CD4-positive, alpha-beta memory T cell (primary cell): ENCODE measurements at regions of chr19 and their contacts with region 1.

Region 1: DNA sequence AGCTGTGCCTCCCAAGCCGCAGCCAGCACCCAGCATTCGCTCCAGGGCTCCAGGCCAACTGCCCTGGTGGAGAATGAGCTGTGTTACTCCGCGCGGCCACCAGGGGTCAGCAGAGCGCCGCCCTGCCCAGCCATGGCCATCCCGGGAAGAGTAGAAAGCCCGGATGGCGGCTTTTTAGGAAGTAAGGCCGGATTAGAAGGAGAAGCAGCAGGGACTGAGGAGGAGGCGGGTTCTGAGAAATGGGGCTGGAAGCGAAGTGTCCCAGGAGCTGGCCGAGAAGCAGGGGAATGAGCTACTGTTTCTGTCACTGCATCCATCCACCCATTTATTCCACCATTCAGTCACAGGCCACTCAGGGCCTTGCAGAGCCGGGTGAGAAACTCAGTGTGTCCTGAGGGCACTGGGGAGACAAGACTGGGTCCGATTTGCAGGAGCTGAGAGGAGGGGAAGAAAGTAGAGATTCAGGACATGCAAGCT is 6.6 kb upstream of the NPAS1 start:
- DNase-seq: peak; percentile 51 to 62 (median 53)
- H3K4me3 ChIP-seq: no peak overlapping the region
- H3K4me3 Mint-ChIP-seq: peak overlapping the region in 6 of 8 donors; percentile 6 to 65 (median 30)
- H3K27ac ChIP-seq: no peak overlapping the region
- H3K27ac Mint-ChIP-seq: peak overlapping the region in 2 of 7 donors; percentile 53 to 57
- H3K4me1 ChIP-seq: peaks cover 7% of the 10 kb centered on the region
- H3K4me1 Mint-ChIP-seq: peaks cover 8 to 9% (median 9%) of the 10 kb centered on the region in 4 donors
- H3K27me3 ChIP-seq: no peaks in the 10 kb centered on the region
- H3K27me3 Mint-ChIP-seq: peaks cover 5 to 10% of the 10 kb centered on the region in 2 donors

Region 2: DNA sequence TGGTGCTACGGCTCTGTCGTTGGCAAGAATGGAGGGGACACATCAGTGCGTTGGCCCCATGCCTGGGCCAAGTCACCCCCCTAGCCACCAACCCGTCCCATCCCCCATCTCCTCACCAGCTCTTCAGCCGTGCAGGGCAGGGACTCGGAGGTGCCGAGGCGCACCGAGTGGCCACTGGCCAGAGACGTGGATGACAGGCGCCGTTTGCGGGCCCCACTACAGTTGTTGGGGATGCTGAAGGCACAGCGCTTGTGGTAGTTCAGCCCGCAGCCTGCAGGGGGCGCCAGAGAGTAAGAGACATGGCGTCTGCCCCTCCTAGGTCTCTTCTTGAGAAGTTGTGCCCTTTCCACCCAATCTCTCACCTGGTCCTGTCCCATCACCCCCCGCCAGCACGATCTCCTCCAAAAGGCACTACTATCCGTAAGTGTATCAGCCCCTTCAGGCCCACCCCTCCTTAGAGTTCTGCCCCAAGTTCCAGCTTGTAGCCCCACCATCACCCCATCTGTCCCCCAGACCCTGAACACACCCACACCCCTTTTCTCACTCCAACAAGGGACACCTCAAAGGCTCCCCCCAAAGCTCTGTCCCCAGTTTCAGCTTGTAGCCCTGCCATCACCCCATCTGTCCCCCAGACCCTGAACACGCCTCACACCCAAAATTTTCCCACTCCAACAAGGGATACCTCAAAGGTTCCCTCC is 308.6 kb before region 1 on chr19:
- CTCF ChIA-PET with region 1: no interaction called
- POLR2A ChIA-PET with region 1: no interaction called
- intact Hi-C with region 1: no loop called
- DNase-seq: peak; percentile 74 to 83 (median 79)
- H3K4me3 ChIP-seq: no peak overlapping the region
- H3K4me3 Mint-ChIP-seq: peak overlapping the region in 1 of 8 donors; percentile 45
- H3K27ac ChIP-seq: no peak overlapping the region
- H3K27ac Mint-ChIP-seq: peak overlapping the region; percentile 10 to 92 (median 87)
- H3K4me1 ChIP-seq: peaks cover 14% of the 10 kb centered on the region
- H3K4me1 Mint-ChIP-seq: peaks cover 6 to 18% (median 12%) of the 10 kb centered on the region in 4 donors
- H3K27me3 ChIP-seq: no peaks in the 10 kb centered on the region
- H3K27me3 Mint-ChIP-seq: no peaks in the 10 kb centered on the region

Region 3: GRCh38 chr19:46882034-46882433 is 131.0 kb before region 1 on chr19:
- CTCF ChIA-PET with region 1: interaction called, 11 read pairs
- POLR2A ChIA-PET with region 1: no interaction called
- intact Hi-C with region 1: no loop called
- DNase-seq: no peak
- H3K4me3 ChIP-seq: no peak overlapping the region
- H3K4me3 Mint-ChIP-seq: no peak overlapping the region
- H3K27ac ChIP-seq: no peak overlapping the region
- H3K27ac Mint-ChIP-seq: no peak overlapping the region
- H3K4me1 ChIP-seq: peaks cover 20% of the 10 kb centered on the region
- H3K4me1 Mint-ChIP-seq: peaks cover 20 to 47% (median 28%) of the 10 kb centered on the region in 4 donors
- H3K27me3 ChIP-seq: no peaks in the 10 kb centered on the region
- H3K27me3 Mint-ChIP-seq: no peaks in the 10 kb centered on the region

Region 4: GRCh38 chr19:46984077-46985010 is 28.7 kb before region 1 on chr19:
- CTCF ChIA-PET with region 1: interaction called, 19 read pairs
- POLR2A ChIA-PET with region 1: no interaction called
- intact Hi-C with region 1: no loop called
- DNase-seq: no peak
- H3K4me3 ChIP-seq: no peak overlapping the region
- H3K4me3 Mint-ChIP-seq: no peak overlapping the region
- H3K27ac ChIP-seq: no peak overlapping the region
- H3K27ac Mint-ChIP-seq: peak overlapping the region in 1 of 7 donors; percentile 13
- H3K4me1 ChIP-seq: peaks cover 16% of the 10 kb centered on the region
- H3K4me1 Mint-ChIP-seq: peaks cover 17 to 36% (median 20%) of the 10 kb centered on the region in 4 donors
- H3K27me3 ChIP-seq: no peaks in the 10 kb centered on the region
- H3K27me3 Mint-ChIP-seq: no peaks in the 10 kb centered on the region

Region 5: DNA sequence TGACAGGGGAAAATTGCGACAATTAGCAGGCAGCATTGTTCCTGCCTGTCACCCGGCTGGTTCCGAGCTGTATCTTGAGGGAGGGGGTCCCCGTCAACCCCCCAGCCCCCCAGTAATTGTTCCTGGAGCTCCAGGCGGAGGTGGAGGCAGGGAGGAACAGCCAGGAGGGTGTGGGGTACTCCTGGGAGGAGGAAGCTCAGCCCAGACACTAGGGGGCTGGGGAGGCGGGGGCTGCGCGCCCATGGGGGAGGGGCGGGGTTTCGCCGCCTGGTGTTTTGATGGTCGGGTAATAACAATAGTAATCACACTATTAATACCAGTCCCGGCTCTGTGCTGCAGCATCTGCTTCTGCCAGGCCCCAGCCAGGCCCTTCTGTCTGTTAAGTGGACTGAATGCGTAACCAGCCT is 15.1 kb after region 1 on chr19:
- CTCF ChIA-PET with region 1: interaction called, 43 read pairs
- POLR2A ChIA-PET with region 1: interaction called, 3 read pairs
- intact Hi-C with region 1: loop called (anchors 1 kb)
- DNase-seq: no peak
- H3K4me3 ChIP-seq: no peak overlapping the region
- H3K4me3 Mint-ChIP-seq: no peak overlapping the region
- H3K27ac ChIP-seq: no peak overlapping the region
- H3K27ac Mint-ChIP-seq: no peak overlapping the region
- H3K4me1 ChIP-seq: peaks cover 11% of the 10 kb centered on the region
- H3K4me1 Mint-ChIP-seq: peaks cover 2 to 12% (median 6%) of the 10 kb centered on the region in 4 donors
- H3K27me3 ChIP-seq: peaks cover 20% of the 10 kb centered on the region
- H3K27me3 Mint-ChIP-seq: peaks cover 41 to 46% of the 10 kb centered on the region in 2 donors